ENCODE measurements at regions of chr11 and their contacts with region 1.

Region 1: GRCh38 chr11:9748361-9748970 is 84.6 kb downstream of the SWAP70 start:
- DNase-seq: peak; percentile 81
- H3K4me3 ChIP-seq: no peak overlapping the region
- H3K27ac ChIP-seq: no peak overlapping the region
- H3K4me1 ChIP-seq: peaks cover 16% of the 10 kb centered on the region
- H3K27me3 ChIP-seq: no peaks in the 10 kb centered on the region
- CTCF ChIP-seq: peak; percentile 60 to 66
- POLR2A ChIP-seq: peak; percentile 1

Region 2: GRCh38 chr11:9534791-9535781 is 213.4 kb before region 1 on chr11:
- CTCF ChIA-PET with region 1: interaction called, 43 read pairs
- POLR2A ChIA-PET with region 1: no interaction called
- dilution Hi-C with region 1: no loop called
- intact Hi-C with region 1: no loop called
- DNase-seq: peak; percentile 66
- H3K4me3 ChIP-seq: no peak overlapping the region
- H3K27ac ChIP-seq: no peak overlapping the region
- H3K4me1 ChIP-seq: no peaks in the 10 kb centered on the region
- H3K27me3 ChIP-seq: no peaks in the 10 kb centered on the region
- CTCF ChIP-seq: peak; percentile 83 to 90
- POLR2A ChIP-seq: no peak

Region 3: GRCh38 chr11:9594267-9595046 is 154.0 kb before region 1 on chr11:
- CTCF ChIA-PET with region 1: interaction called, 14 read pairs
- POLR2A ChIA-PET with region 1: no interaction called
- dilution Hi-C with region 1: no loop called
- intact Hi-C with region 1: no loop called
- DNase-seq: no peak
- H3K4me3 ChIP-seq: no peak overlapping the region
- H3K27ac ChIP-seq: no peak overlapping the region
- H3K4me1 ChIP-seq: no peaks in the 10 kb centered on the region
- H3K27me3 ChIP-seq: no peaks in the 10 kb centered on the region
- CTCF ChIP-seq: no peak
- POLR2A ChIP-seq: no peak

Region 4: GRCh38 chr11:9651899-9652748 is 96.3 kb before region 1 on chr11:
- CTCF ChIA-PET with region 1: no interaction called
- POLR2A ChIA-PET with region 1: no interaction called
- dilution Hi-C with region 1: no loop called
- intact Hi-C with region 1: no loop called
- DNase-seq: peak; percentile 84
- H3K4me3 ChIP-seq: no peak overlapping the region
- H3K27ac ChIP-seq: peak overlapping the region; percentile 53
- H3K4me1 ChIP-seq: peaks cover 17% of the 10 kb centered on the region
- H3K27me3 ChIP-seq: no peaks in the 10 kb centered on the region
- CTCF ChIP-seq: no peak
- POLR2A ChIP-seq: no peak

Region 5: DNA sequence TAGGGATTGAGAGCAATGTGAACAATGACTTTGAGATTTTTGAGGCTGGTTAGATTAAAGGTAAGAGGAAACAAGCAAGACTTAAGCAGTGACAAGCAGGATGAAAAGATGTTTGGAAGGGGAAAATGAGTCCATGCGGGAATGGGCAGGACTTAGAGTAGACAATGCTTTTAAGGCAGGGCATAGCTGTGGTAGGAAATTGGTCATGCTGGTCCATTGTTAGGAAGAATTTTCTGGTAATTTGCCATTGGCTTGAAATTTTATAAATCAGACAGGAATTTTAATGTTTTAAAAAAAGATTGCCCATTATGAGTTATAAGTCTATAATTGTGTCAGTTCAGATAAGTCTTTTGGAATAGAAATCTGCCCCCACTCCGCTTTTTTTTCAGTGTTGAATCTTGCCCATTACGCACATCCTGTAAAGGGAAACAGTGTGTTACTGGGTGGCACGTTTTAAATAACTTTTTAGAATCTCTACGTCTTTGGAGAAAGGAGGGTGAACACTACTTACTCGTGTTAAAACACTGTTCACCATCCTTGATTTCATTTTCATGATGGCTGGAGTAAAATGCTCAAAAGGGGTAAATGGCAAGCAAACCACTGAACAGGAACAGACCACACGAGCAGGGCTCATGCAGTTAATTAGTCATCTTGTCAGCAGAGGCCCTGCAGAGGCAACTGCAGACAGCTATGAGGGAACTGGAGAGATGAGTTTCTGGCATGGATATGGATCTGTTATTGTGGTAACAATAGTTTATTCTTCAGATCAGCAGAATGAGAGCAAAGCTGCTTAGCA is 59.6 kb before region 1 on chr11:
- CTCF ChIA-PET with region 1: interaction called, 15 read pairs
- POLR2A ChIA-PET with region 1: no interaction called
- dilution Hi-C with region 1: no loop called
- intact Hi-C with region 1: loop called (anchors 2 kb)
- DNase-seq: peak; percentile 96
- H3K4me3 ChIP-seq: peak overlapping the region in 2 of 3 experiments; percentile 10 to 31
- H3K27ac ChIP-seq: peak overlapping the region; percentile 98
- H3K4me1 ChIP-seq: peaks cover 66% of the 10 kb centered on the region
- H3K27me3 ChIP-seq: no peaks in the 10 kb centered on the region
- CTCF ChIP-seq: no peak
- POLR2A ChIP-seq: peak; percentile 72

Region 6: GRCh38 chr11:9972989-9973388 is 224.5 kb after region 1 on chr11:
- CTCF ChIA-PET with region 1: interaction called, 14 read pairs
- POLR2A ChIA-PET with region 1: no interaction called
- dilution Hi-C with region 1: no loop called
- intact Hi-C with region 1: no loop called
- DNase-seq: peak; percentile 74
- H3K4me3 ChIP-seq: no peak overlapping the region
- H3K27ac ChIP-seq: no peak overlapping the region
- H3K4me1 ChIP-seq: peaks cover 14% of the 10 kb centered on the region
- H3K27me3 ChIP-seq: no peaks in the 10 kb centered on the region
- CTCF ChIP-seq: peak; percentile 58 to 61
- POLR2A ChIP-seq: no peak

Measured in endothelial cell of umbilical vein (primary cell).